Calu3 (cell line): ENCODE measurements at regions of chr3 and their contacts with region 1.

Region 1: DNA sequence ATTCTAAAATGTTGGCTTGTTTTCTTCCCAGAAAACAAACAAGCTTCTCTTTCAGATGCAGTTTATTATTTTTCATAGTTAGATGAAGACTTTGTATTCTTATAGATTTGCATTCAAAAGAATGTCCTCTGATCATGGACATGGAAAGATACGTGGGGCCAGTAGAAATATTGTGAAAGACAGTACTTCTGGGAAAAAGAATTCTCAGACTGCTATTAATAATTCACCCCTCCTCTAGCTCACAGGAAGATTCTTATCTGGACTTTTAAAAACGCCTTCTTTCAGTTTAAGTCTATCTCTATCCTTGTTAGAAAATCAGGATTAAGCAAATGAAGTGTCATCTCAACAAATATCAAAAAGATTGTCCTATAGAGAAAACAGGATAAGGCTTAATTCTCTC is 514.1 kb upstream of the ADAMTS9 start:
- DNase-seq: no peak
- H3K4me3 Mint-ChIP-seq: no peak overlapping the region
- H3K27ac Mint-ChIP-seq: no peak overlapping the region
- H3K4me1 Mint-ChIP-seq: no peaks in the 10 kb centered on the region
- H3K27me3 Mint-ChIP-seq: peaks cover 13% of the 10 kb centered on the region
- CTCF ChIP-seq: no peak

Region 2: DNA sequence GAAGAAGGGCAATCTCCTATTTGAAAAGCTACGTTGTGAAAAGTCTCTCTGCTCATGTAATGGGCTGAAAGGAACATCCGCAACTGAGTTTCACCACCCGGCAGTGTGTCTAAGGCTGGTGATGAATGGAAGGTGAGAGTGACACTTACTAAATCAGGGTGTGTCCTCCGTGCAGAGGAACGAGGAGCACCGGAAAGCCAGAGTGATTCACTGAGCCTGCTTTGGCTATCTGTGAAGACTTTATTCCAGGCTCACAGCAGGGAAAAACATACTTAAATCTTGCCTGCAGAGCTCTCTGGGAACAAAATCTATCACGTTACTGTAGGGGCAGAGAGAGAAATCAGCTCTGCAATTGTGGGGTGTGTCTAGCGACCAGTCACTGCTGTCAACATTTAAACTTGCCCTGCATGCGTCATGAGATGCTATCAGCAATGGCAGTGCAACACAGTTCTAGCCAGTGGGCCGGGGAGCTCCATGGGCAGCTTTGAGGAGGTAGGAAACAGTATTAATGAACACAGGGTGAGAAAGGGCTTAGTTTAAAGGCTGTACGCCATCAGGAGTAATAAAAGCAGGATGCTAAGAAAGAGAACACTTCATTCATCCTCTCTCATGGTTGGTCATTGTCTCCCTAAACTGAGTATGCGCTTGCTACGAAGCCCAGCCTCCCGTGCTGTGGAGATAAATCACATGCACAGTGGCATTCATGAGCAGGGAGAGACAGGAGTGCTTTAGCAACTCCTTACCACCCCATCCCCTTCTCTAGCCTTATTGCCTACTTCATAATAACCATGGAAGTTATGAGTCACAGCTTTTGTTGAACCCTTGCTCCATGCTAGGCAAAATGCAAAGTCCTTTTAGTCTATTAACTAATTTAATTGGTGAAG is 28.6 kb after region 1 on chr3:
- CTCF ChIA-PET with region 1: interaction called, 3 read pairs
- intact Hi-C with region 1: loop called (anchors 1 kb)
- DNase-seq: no peak
- H3K4me3 Mint-ChIP-seq: no peak overlapping the region
- H3K27ac Mint-ChIP-seq: no peak overlapping the region
- H3K4me1 Mint-ChIP-seq: no peaks in the 10 kb centered on the region
- H3K27me3 Mint-ChIP-seq: peaks cover 4% of the 10 kb centered on the region
- CTCF ChIP-seq: no peak

Region 3: DNA sequence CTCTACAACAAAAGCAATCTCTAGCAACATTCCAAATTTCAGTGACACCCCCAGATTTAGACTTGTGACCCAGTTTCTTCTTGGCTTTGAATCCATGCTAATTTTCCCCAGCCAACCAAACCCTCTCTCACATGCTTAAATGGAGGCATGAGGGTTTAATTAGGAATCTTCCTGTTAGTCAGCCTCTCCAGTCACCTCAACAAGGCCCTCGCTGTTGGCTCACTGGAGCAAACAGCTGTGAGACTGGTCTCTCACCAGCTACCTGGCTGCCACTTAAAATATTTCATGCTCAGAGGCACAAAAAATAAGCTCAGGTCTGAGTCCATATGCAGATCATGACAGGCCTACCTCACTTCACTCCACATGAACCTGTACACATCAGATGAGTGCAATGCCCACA is 116.3 kb after region 1 on chr3:
- CTCF ChIA-PET with region 1: no interaction called
- intact Hi-C with region 1: no loop called
- DNase-seq: no peak
- H3K4me3 Mint-ChIP-seq: no peak overlapping the region
- H3K27ac Mint-ChIP-seq: no peak overlapping the region
- H3K4me1 Mint-ChIP-seq: no peaks in the 10 kb centered on the region
- H3K27me3 Mint-ChIP-seq: peaks cover 33% of the 10 kb centered on the region
- CTCF ChIP-seq: no peak

Region 4: DNA sequence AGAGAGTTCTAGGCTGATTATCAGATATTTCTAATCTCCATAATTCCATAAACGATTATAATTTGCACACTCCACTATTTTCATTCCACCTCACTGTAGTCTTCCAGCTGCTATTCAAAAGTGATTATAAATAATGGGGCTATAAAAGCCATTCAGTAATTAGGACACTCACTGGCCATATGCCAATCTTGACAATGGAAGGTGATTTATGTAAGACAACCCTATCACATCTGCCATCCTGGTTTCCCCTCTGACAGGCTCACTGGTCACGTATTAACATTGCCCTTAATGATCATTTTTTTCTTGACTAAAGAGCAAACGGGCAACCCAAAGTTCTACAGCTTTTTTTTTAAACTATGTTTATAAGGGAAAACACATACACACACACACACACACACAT is 434.4 kb after region 1 on chr3:
- CTCF ChIA-PET with region 1: no interaction called
- intact Hi-C with region 1: no loop called
- DNase-seq: no peak
- H3K4me3 Mint-ChIP-seq: no peak overlapping the region
- H3K27ac Mint-ChIP-seq: no peak overlapping the region
- H3K4me1 Mint-ChIP-seq: no peaks in the 10 kb centered on the region
- H3K27me3 Mint-ChIP-seq: no peaks in the 10 kb centered on the region
- CTCF ChIP-seq: no peak

Region 5: GRCh38 chr3:66655671-66656070 is 1453.7 kb after region 1 on chr3:
- CTCF ChIA-PET with region 1: no interaction called
- intact Hi-C with region 1: no loop called
- DNase-seq: no peak
- H3K4me3 Mint-ChIP-seq: no peak overlapping the region
- H3K27ac Mint-ChIP-seq: no peak overlapping the region
- H3K4me1 Mint-ChIP-seq: no peaks in the 10 kb centered on the region
- H3K27me3 Mint-ChIP-seq: peaks cover 16% of the 10 kb centered on the region
- CTCF ChIP-seq: no peak